ENCODE measurements at regions of chr2 and their contacts with region 1.

Region 1: GRCh38 chr2:196182439-196183171 is 11.2 kb upstream of the STK17B start:
- DNase-seq: peak; percentile 38
- ATAC-seq: peak; percentile 56
- H3K4me3 ChIP-seq: peak overlapping the region in 1 of 5 experiments; percentile 27
- H3K4me3 Mint-ChIP-seq: peak overlapping the region; percentile 73
- H3K27ac ChIP-seq: peak overlapping the region; percentile 65 to 82
- H3K27ac Mint-ChIP-seq: peak overlapping the region; percentile 88
- H3K4me1 ChIP-seq: peaks cover 66 to 67% of the 10 kb centered on the region in 2 donors
- H3K4me1 Mint-ChIP-seq: peaks cover 75% of the 10 kb centered on the region
- H3K27me3 ChIP-seq: no peaks in the 10 kb centered on the region
- H3K27me3 Mint-ChIP-seq: no peaks in the 10 kb centered on the region
- CTCF ChIP-seq: no peak

Region 2: GRCh38 chr2:196200557-196200956 is 18.0 kb after region 1 on chr2:
- CTCF ChIA-PET with region 1: interaction called, 10 read pairs
- POLR2A ChIA-PET with region 1: interaction called, 5 read pairs
- intact Hi-C with region 1: loop called (anchors 2 kb)
- DNase-seq: peak; percentile 51
- ATAC-seq: peak; percentile 79
- H3K4me3 ChIP-seq: peak overlapping the region in 2 of 5 experiments; percentile 2 to 32
- H3K4me3 Mint-ChIP-seq: peak overlapping the region; percentile 70
- H3K27ac ChIP-seq: peak overlapping the region in 1 of 2 donors; percentile 47
- H3K27ac Mint-ChIP-seq: peak overlapping the region; percentile 79
- H3K4me1 ChIP-seq: peaks cover 12 to 18% of the 10 kb centered on the region in 2 donors
- H3K4me1 Mint-ChIP-seq: peaks cover 38% of the 10 kb centered on the region
- H3K27me3 ChIP-seq: no peaks in the 10 kb centered on the region
- H3K27me3 Mint-ChIP-seq: no peaks in the 10 kb centered on the region
- CTCF ChIP-seq: no peak

Measured in B cell (primary cell).